Ovary (tissue), 10 donors: ENCODE measurements at regions of chr11 and their contacts with region 1.

Region 1: DNA sequence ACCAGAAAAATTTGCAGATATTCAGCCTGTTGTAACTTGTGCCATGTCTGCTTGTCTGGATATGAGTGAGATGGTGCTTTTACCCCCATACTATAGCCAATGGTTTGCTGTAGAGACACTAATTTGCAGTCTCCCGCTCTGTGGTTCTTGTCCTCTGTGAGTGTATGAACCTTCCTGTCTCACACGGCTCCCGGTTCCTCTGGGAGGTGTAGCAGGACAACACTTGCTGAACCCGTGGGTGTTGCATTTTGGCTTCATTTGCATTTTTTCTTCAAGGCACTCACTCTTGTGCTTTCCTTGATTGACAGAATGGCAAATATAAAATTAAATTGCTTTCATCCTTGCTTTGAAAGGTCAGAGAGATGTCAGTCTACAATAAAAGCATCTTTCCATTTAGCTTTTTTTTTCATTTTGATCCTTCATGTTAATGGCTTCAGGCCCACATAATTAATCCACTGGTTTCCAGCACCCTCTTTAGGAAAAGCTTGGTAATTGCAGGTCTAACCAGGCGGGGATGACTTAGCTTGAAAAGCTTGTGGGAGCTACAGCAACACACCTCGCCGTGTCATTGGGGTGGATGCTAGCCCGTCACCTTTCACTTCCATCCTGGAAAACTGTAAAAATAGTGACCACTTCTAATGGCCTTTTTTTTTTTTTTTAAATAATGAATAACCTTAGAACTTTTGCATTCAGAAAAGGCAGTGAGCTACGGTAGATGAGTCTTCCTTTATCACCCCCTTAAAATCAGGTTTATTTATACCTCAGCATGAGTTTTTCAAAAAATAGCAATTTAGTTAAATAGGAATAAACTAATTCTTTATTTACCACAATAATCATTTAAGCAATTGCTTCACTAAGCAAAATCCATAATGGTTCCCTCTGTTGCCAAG is 27.4 kb upstream of the ST14 start:
- DNase-seq: peak in 1 of 5 donors; percentile 50
- H3K4me3 ChIP-seq: no peak overlapping the region
- H3K27ac ChIP-seq: no peak overlapping the region
- H3K4me1 ChIP-seq: peaks cover 3% of the 10 kb centered on the region
- H3K27me3 ChIP-seq: no peaks in the 10 kb centered on the region
- CTCF ChIP-seq: peak in 2 of 3 donors; percentile 57 to 62
- EP300 ChIP-seq: no peak
- POLR2A ChIP-seq: no peak

Region 2: DNA sequence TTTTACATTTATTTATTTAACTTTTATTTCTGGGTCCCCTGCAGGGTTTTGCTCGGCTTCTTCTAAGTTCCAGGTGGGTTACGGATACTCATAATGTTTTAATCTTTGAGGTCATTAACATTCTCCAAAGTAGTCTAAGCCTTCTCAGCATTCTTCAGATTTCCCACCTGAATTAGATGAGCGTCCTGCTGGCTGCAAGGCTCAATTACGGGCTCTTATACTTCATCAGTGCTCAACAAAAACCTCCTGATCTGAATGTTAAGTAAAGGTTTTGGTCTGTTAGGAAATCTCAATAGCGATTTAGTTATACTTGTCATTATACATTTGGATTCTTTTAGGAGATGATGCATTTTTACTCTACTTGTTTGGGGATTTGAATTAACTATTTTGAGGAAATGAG is 209.5 kb before region 1 on chr11:
- intact Hi-C with region 1: loop called (anchors 2 to 5 kb)
- DNase-seq: no peak
- H3K4me3 ChIP-seq: no peak overlapping the region
- H3K27ac ChIP-seq: no peak overlapping the region
- H3K4me1 ChIP-seq: no peaks in the 10 kb centered on the region
- H3K27me3 ChIP-seq: no peaks in the 10 kb centered on the region
- CTCF ChIP-seq: no peak
- EP300 ChIP-seq: no peak
- POLR2A ChIP-seq: no peak

Region 3: GRCh38 chr11:129968591-129969419 is 163.4 kb before region 1 on chr11:
- intact Hi-C with region 1: loop called in 1 of 4 experiments (anchors 1 kb)
- DNase-seq: no peak
- H3K4me3 ChIP-seq: no peak overlapping the region
- H3K27ac ChIP-seq: no peak overlapping the region
- H3K4me1 ChIP-seq: peaks cover 1% of the 10 kb centered on the region
- H3K27me3 ChIP-seq: no peaks in the 10 kb centered on the region
- CTCF ChIP-seq: no peak
- EP300 ChIP-seq: no peak
- POLR2A ChIP-seq: no peak

Region 4: GRCh38 chr11:129992161-129992944 is 139.9 kb before region 1 on chr11:
- intact Hi-C with region 1: loop called in 1 of 4 experiments (anchors 10 kb)
- DNase-seq: peak in 1 of 5 donors; percentile 28
- H3K4me3 ChIP-seq: no peak overlapping the region
- H3K27ac ChIP-seq: no peak overlapping the region
- H3K4me1 ChIP-seq: peaks cover 7% of the 10 kb centered on the region
- H3K27me3 ChIP-seq: no peaks in the 10 kb centered on the region
- CTCF ChIP-seq: no peak
- EP300 ChIP-seq: no peak
- POLR2A ChIP-seq: no peak

Region 5: DNA sequence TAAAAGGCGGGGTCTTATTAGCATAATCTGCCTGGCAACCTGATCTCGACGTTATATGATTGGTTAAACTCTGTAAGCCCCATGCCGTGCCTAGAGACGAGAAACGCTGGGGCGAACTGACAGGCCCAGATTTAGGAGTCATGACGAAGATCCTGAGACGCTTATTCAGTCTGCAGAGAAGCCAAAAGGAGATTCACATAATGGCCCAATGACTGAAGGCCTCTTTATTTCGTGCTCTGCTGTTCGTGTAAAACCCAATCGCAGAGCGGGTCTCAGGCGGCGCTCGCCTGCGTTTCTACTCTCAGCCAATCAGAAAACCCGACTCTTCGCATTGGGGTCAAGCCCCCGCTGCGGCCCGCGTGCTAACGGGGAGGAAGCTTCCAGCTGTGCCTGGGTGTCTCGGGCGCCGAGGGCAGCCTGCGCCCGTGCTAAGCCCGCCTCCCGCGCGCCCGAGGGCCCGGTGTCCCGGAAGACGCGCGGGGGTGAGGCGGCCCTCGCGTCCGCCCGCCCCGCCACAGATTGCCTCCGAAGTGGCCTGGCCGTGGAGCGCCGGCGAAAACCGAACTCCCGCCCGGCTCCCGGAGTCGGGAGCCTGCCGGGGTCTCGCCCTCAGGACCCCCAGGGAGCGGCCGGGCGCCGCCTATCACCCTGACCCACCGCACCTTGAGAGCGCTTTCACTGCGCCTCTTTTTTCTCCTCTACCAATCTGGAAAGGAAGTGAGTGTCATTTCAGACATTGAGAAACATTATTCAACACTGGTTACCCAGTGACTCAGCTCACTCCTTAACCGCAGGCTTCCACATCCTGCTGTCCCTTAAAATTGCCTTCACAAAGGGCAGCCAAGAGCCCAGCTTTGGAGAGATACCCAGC is 129.1 kb before region 1 on chr11:
- intact Hi-C with region 1: loop called in 2 of 4 experiments (anchors 10 kb)
- DNase-seq: peak; percentile 93 to 95 (median 94)
- H3K4me3 ChIP-seq: peak overlapping the region; percentile 89
- H3K27ac ChIP-seq: peak overlapping the region; percentile 96 to 99
- H3K4me1 ChIP-seq: peaks cover 3% of the 10 kb centered on the region
- H3K27me3 ChIP-seq: no peaks in the 10 kb centered on the region
- CTCF ChIP-seq: no peak
- EP300 ChIP-seq: no peak
- POLR2A ChIP-seq: peak; percentile 73

Region 6: DNA sequence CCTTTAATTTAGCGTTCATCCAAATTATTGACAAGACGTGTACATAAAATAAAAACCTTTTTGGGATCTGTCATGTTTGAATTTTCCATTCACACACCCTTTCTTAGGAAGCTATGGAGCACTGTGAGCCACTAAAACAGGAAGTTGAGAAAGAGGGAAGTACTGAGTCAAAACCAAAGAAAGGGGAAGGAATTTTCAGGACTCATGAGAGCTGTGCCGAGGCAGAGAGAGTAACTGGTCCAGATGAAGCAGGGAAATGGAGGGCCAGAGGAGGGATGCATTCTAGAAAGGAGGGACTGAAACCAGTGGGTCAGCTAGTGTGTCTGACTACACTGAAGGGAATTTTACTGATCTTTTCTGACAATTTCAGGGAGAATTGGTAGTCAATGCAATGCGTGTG is 37.6 kb before region 1 on chr11:
- intact Hi-C with region 1: no loop called
- DNase-seq: no peak
- H3K4me3 ChIP-seq: no peak overlapping the region
- H3K27ac ChIP-seq: no peak overlapping the region
- H3K4me1 ChIP-seq: peaks cover 8% of the 10 kb centered on the region
- H3K27me3 ChIP-seq: no peaks in the 10 kb centered on the region
- CTCF ChIP-seq: no peak
- EP300 ChIP-seq: no peak
- POLR2A ChIP-seq: no peak

Region 7: DNA sequence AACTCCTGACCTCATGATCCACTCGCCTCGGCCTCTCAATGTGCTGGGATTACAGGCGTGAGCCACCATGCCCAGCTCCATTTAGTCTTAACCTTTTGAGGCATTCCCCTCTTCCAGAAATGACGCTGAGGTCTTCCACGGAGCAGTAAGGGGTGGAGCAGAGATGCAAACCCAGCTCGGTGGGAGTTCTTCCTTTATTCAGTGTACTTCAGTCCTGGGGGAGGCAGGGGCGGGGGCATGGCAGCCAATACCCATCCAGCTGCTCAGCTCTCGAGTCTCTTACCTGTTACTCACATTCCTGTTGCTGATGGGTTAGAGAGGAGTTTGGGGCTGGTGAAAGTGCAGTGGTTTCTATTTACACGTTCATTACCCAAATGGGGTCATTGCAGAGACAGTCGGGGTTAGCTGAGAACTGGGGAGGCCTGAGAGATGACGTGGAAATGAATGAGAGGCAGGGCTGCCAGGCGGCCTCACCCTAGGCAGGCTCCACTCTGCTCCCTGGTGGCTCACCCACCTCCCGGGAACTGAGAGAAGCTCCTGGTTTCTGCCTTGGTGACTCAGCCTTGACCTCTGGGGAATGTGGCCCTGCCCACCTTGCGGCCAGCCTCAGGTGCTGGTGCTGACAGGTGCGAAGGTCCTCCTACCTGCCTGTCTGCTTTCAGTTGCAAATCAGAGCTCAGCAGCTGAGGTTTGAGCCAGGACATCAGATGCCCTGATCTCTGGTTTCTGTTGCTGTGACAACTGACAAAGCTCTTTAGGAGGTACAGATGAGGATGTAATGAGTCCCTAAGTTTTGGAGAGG is 14.0 kb after region 1 on chr11:
- intact Hi-C with region 1: no loop called
- DNase-seq: no peak
- H3K4me3 ChIP-seq: no peak overlapping the region
- H3K27ac ChIP-seq: no peak overlapping the region
- H3K4me1 ChIP-seq: peaks cover 3% of the 10 kb centered on the region
- H3K27me3 ChIP-seq: no peaks in the 10 kb centered on the region
- CTCF ChIP-seq: no peak
- EP300 ChIP-seq: no peak
- POLR2A ChIP-seq: no peak